Sigmoid colon (tissue), 7 donors: ENCODE measurements at regions of chr7 and their contacts with region 1.

Region 1: GRCh38 chr7:120857588-120858573 is at the start of gene TSPAN12:
- DNase-seq: peak; percentile 89
- H3K4me3 ChIP-seq: peak within 1 kb of the TSS; percentile 57 to 80 (median 73)
- H3K27ac ChIP-seq: peak within 1 kb of the TSS; percentile 81 to 93 (median 90)
- H3K4me1 ChIP-seq: peaks cover 0 to 23% (median 9%) of the 10 kb centered on the region in 4 donors
- H3K27me3 ChIP-seq: no peaks in the 10 kb centered on the region
- CTCF ChIP-seq: peak; percentile 37 to 80 (median 50)
- EP300 ChIP-seq: no peak
- POLR2A ChIP-seq: no peak
- total RNA-seq, gene TSPAN12: 19.9 to 47.7 (median 32.8) TPM

Region 2: DNA sequence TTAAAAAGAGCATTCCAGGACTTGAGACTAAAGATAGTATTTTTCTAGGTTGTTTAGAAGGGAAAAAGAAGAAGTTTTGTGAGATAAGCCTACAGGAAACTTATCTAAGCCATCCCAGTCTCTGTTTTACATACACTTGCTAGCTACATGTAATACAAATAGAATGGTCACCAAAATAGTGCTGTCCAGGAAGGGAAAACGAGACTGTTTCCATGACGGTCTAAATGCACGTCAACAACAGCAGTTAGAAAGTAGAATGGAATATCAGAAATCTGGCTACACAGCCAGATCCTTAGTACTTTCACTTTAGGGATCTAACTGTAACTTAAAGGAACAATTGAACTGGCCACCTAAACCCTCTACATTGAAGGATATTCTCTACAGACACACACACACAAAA is 117.5 kb before region 1 on chr7:
- intact Hi-C with region 1: loop called (anchors 5 kb)
- DNase-seq: no peak
- H3K4me3 ChIP-seq: peak overlapping the region in 3 of 4 donors; percentile 6 to 28 (median 21)
- H3K27ac ChIP-seq: peak overlapping the region in 2 of 4 donors; percentile 48 to 51
- H3K4me1 ChIP-seq: peaks cover 0 to 33% (median 8%) of the 10 kb centered on the region in 4 donors
- H3K27me3 ChIP-seq: no peaks in the 10 kb centered on the region
- CTCF ChIP-seq: no peak
- EP300 ChIP-seq: no peak
- POLR2A ChIP-seq: no peak

Region 3: GRCh38 chr7:120950539-120951308 is 92.8 kb after region 1 on chr7 and contains the start of gene ING3:
- intact Hi-C with region 1: loop called (anchors 5 kb)
- DNase-seq: peak; percentile 99
- H3K4me3 ChIP-seq: peak within 1 kb of the TSS; percentile 64 to 73 (median 68)
- H3K27ac ChIP-seq: peak within 1 kb of the TSS; percentile 94 to 96 (median 96)
- H3K4me1 ChIP-seq: peaks cover 0 to 34% (median 10%) of the 10 kb centered on the region in 4 donors
- H3K27me3 ChIP-seq: no peaks in the 10 kb centered on the region
- CTCF ChIP-seq: no peak
- EP300 ChIP-seq: peak in 1 of 4 donors; percentile 56
- POLR2A ChIP-seq: no peak
- total RNA-seq, gene ING3: 16.6 to 33.1 (median 25.4) TPM